ENCODE measurements at regions of chr6 and their contacts with region 1.

Region 1: DNA sequence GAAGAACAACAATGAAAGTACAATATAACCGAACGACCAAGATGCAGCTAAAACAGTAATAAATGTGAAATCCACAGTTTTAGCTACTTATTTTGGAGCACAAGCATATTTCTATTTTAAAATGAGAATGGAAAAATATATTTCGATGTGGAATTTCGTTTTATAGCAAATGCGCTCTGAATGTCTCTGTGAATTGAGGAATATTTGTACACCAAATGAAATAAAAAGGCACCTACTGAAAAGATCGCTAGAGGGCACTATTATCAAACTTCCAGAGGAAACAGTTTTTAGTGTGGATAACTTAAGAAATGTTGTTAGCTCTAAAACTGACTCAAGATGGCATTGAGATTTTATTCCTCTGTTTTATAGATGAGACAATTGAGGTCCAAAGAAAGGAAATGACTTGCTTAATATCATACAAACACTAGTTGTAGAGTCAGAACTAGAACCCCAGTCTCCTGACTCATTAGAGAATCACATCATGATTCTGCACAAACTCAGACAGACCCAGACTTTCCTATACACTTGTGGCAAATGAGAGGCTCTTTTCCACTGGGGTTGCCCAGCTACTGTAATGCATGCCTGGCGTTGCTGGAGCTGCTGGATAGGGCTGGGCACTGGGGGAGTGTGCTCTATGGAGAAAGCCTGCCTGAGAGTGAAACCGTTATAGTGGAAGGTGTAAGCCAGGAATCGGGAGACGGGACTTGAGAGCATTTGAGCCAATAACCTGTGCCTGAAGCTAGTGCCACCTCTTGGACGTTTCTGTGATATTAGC is 51.9 kb downstream of the GCLC start:
- DNase-seq: peak; percentile 20
- CTCF ChIP-seq: peak; percentile 46

Region 2: GRCh38 chr6:53651764-53652401 is 158.8 kb after region 1 on chr6:
- in situ Hi-C with region 1: loop called (anchors 10 kb)
- DNase-seq: peak; percentile 70
- CTCF ChIP-seq: peak; percentile 46

Region 3: DNA sequence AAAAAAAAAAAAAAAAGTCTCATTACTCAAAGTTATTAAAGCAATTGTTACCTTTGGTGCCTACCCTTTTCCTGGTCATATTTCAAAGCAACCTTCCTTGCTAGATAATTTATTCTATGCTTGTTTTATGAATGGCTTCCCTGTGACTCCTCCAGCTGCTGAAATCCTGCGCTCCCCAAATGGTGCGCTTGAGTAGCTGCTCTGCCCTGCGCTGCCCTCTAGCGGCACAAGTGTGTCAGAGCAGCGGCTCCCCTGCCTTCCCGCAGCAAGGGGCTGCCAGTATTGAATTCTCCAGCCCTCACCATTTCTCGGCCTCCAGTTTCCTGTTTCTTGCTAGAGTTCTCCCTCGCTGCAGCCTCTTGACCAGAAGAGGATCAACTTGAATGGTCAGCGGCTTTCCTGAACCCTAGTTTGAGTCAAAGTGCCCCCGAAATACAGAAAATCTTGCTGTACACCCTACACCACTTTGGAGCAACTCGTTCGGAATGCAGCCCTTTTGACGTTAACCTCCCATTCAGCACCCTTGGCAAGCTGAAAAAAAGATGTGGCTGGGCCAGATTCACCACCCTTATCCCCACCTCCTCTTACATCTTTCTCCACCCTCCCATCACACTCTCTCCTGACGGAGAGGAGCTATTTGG is 232.9 kb after region 1 on chr6:
- in situ Hi-C with region 1: loop called (anchors 10 kb)
- DNase-seq: peak; percentile 84
- CTCF ChIP-seq: peak; percentile 97